ENCODE measurements at regions of chr6 and their contacts with region 1.

Region 1: DNA sequence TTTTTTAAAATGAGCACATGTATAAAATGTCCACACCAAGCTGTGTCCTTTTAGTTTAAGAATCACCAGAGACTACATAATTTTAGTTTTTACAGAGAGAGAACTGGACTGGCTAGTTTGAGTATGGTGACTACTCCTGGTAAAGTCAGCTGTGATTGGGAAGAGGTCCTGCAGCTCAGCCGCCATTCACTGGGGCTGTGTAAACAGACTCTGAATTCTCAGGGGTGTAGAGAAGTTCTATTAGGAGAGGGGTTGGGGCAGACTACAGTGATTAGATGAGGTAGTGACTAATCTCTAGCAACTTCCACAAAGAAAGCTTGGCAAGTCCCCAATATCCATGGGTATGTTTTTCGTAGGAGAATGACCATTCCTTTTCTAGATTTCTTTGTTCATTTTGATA is 341.2 kb upstream of the MAP3K7 start:
- DNase-seq: no peak
- ATAC-seq: no peak
- H3K4me3 Mint-ChIP-seq: no peak overlapping the region
- H3K27ac Mint-ChIP-seq: no peak overlapping the region
- H3K4me1 Mint-ChIP-seq: peaks cover 5% of the 10 kb centered on the region
- H3K27me3 Mint-ChIP-seq: peaks cover 14% of the 10 kb centered on the region

Region 2: DNA sequence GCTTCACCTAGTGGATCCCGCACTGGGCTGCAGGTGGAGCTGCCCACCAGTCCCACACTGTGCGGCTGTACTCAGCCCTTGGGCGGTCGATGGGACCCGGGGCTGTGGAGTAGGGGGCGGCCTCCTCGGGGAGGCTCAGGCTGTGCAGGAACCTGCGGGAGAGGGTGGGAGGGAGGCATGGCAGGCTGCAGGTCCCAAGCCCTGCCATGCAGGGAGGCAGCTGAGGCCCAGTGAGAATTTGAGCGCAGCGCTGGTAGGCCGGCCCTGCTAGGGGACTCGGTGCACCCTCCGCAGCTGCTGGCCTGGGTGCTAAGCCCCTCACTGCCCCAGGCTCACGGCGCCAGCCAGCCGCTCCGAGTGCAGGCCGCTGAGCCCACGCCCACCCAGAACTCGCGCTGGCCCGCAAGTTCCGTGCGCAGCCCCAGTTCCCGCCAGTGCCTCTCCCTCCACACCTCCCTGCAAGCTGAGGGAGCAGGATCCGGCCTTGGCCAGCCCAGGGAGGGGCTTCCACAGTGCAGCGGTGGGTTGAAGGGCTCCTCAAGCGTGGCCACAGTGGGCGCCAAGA is 1083.7 kb after region 1 on chr6:
- CTCF ChIA-PET with region 1: no interaction called
- POLR2A ChIA-PET with region 1: no interaction called
- intact Hi-C with region 1: loop called in 1 of 2 experiments (anchors 5 kb)
- DNase-seq: no peak
- ATAC-seq: no peak
- H3K4me3 Mint-ChIP-seq: no peak overlapping the region
- H3K27ac Mint-ChIP-seq: no peak overlapping the region
- H3K4me1 Mint-ChIP-seq: no peaks in the 10 kb centered on the region
- H3K27me3 Mint-ChIP-seq: no peaks in the 10 kb centered on the region

Measured in activated CD4-positive, alpha-beta T cell treated with anti-CD3 and anti-CD28 coated beads for 36 hours (primary cell).